Heart right ventricle (tissue), 16 donors: ENCODE measurements at regions of chr13 and their contacts with region 1.

Region 1: DNA sequence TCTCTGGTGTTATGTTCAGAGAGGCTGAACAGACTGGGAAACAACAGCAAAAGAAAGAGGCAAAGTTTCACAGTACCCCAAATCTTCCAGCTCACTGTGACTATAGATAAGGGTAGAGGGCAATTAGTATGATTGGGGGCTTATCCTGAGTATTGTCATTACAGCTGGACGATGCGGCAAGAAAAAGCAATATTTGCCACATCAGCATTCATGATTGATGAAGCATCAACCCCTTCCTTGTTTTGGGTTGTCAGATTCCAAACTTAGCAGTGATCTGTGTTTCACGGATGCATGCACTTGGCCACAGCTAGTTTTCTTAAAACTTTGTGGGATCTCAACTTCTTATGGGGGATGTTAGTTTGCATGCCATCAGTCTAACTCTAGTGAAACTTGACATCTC is 348.8 kb upstream of the SLITRK5 start:
- DNase-seq: no peak
- ATAC-seq: no peak
- H3K4me3 ChIP-seq: no peak overlapping the region
- H3K27ac ChIP-seq: no peak overlapping the region
- H3K4me1 ChIP-seq: no peaks in the 10 kb centered on the region
- H3K27me3 ChIP-seq: no peaks in the 10 kb centered on the region
- CTCF ChIP-seq: no peak

Region 2: DNA sequence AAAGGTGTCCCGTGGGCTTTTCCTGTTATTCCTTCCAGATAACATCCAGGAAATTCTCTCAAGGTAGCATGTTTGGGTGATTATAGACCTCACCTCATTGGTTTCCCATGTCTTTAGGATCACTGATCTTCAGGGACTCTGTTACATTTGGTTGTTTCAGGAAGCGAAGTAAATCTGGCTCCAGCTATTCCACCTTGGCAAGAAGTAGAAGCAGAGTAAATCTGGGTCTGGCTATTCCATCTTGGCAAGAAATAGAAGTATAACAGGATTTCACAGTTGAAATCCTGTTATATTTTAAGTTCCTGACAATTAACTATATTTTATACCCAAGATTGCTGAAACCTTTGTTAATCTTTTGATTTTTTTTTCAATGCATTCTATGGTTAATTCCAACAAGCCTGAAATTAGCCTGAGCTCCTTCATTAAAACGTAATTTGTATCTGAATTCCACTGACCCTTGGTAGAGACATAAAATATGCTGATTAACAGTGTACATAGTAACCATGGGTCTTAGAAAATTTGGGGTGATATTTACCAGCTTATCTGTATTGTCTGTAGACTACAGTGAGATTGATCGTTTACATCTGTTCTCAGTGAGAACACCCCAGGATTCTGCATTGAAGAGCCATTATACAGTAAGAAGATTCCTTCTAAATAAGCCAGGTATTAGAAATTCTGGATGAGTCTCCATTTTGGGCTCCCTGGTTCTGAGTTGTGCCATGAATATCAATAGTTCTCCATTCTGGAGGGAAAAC is 1255.6 kb before region 1 on chr13:
- intact Hi-C with region 1: loop called in 1 of 10 experiments (anchors 10 kb)
- DNase-seq: no peak
- ATAC-seq: no peak
- H3K4me3 ChIP-seq: no peak overlapping the region
- H3K27ac ChIP-seq: no peak overlapping the region
- H3K4me1 ChIP-seq: no peaks in the 10 kb centered on the region
- H3K27me3 ChIP-seq: no peaks in the 10 kb centered on the region
- CTCF ChIP-seq: no peak

Region 3: DNA sequence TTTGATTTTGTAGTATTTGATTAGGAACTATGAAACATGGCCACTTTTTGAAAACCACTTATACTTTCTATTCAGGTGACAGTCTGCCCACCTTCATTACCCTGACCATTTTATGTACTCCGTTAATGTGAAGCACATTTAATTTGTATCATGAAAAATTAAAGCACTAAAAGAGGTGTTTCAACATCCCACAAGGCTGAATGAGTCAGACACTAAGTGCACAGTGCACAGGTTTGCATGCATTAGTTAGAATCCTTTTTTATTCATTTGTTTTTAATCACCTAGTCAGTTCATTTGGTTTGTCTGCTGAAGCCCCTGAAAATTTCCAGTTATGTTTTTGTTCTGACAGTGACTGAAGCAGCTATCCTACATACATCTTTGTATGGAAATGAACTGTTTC is 619.8 kb after region 1 on chr13:
- intact Hi-C with region 1: no loop called
- DNase-seq: no peak
- ATAC-seq: no peak
- H3K4me3 ChIP-seq: no peak overlapping the region
- H3K27ac ChIP-seq: no peak overlapping the region
- H3K4me1 ChIP-seq: no peaks in the 10 kb centered on the region
- H3K27me3 ChIP-seq: no peaks in the 10 kb centered on the region
- CTCF ChIP-seq: no peak